AG04449 (cell line): ENCODE measurements at regions of chr4 and their contacts with region 1.

Region 1: DNA sequence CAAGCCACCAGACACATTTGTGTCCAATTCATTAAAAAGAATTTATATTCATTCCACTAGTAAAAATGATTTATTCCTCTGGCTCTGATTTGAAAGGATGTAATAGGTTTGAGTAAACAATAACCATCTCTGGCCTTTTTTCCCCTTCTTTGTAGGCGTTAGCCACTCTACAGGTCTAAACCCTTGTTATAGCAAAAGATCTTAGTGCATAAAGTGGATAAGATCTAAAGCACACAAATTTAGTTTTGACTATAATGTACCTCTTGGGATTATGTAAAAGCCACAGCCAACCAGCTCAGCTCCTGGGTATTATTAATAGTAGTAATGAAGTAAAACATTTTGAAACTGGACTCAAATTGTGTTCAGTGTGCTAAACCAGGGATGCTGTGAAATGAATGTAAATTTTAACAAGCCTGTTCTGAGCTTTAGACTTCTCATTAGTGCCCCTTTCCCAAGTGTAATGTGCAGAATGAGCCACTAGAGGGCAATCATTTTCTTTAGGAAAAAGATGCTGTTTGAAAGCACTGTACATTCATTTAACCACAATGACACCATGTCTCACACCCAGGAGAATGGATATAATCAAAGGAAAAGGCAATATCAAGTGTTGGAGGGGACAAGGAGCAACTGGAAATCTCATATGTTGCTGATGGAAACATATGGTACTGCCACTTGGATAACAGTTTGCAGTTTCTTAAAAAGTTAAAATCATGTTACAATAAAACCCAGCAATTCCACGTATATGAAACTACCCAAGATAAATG is 69.7 kb downstream of the KLHL8 start:
- DNase-seq: peak; percentile 38
- H3K4me3 ChIP-seq: no peak overlapping the region
- CTCF ChIP-seq: peak; percentile 71

Region 2: GRCh38 chr4:87060957-87061356 is 89.7 kb before region 1 on chr4:
- CTCF ChIA-PET with region 1: no interaction called
- POLR2A ChIA-PET with region 1: no interaction called
- DNase-seq: no peak
- H3K4me3 ChIP-seq: no peak overlapping the region
- CTCF ChIP-seq: no peak

Region 3: GRCh38 chr4:87166296-87166854 is 15.7 kb after region 1 on chr4:
- CTCF ChIA-PET with region 1: interaction called, 23 read pairs
- POLR2A ChIA-PET with region 1: no interaction called
- DNase-seq: no peak
- H3K4me3 ChIP-seq: no peak overlapping the region
- CTCF ChIP-seq: no peak

Region 4: GRCh38 chr4:87220094-87220822 is 69.6 kb after region 1 on chr4 and contains the start of gene KLHL8:
- CTCF ChIA-PET with region 1: interaction called, 18 read pairs
- POLR2A ChIA-PET with region 1: no interaction called
- DNase-seq: no peak
- H3K4me3 ChIP-seq: peak within 1 kb of the TSS; percentile 98
- CTCF ChIP-seq: peak; percentile 31

Region 5: GRCh38 chr4:87235020-87235671 is 84.5 kb after region 1 on chr4:
- CTCF ChIA-PET with region 1: interaction called, 124 read pairs
- POLR2A ChIA-PET with region 1: no interaction called
- DNase-seq: no peak
- H3K4me3 ChIP-seq: peak overlapping the region; percentile 58
- CTCF ChIP-seq: no peak

Region 6: GRCh38 chr4:87476934-87477333 is 326.3 kb after region 1 on chr4:
- CTCF ChIA-PET with region 1: no interaction called
- POLR2A ChIA-PET with region 1: no interaction called
- DNase-seq: no peak
- H3K4me3 ChIP-seq: no peak overlapping the region
- CTCF ChIP-seq: no peak

Region 7: GRCh38 chr4:88017516-88018297 is 867.0 kb after region 1 on chr4:
- CTCF ChIA-PET with region 1: no interaction called
- POLR2A ChIA-PET with region 1: no interaction called
- DNase-seq: peak; percentile 88
- H3K4me3 ChIP-seq: no peak overlapping the region
- CTCF ChIP-seq: no peak